ENCODE measurements at regions of chr15 and their contacts with region 1.

Region 1: GRCh38 chr15:84570164-84570735 is 30.6 kb upstream of the ZSCAN2 start:
- DNase-seq: peak; percentile 24 to 57 (median 41)
- H3K4me3 ChIP-seq: peak overlapping the region; percentile 65 to 69
- H3K4me3 Mint-ChIP-seq: peak overlapping the region; percentile 83 to 91 (median 87)
- H3K27ac ChIP-seq: peak overlapping the region; percentile 43
- H3K27ac Mint-ChIP-seq: peak overlapping the region; percentile 77 to 95 (median 89)
- H3K4me1 ChIP-seq: peaks cover 7% of the 10 kb centered on the region
- H3K4me1 Mint-ChIP-seq: peaks cover 4 to 24% (median 10%) of the 10 kb centered on the region in 4 donors
- H3K27me3 ChIP-seq: no peaks in the 10 kb centered on the region
- H3K27me3 Mint-ChIP-seq: no peaks in the 10 kb centered on the region

Region 2: DNA sequence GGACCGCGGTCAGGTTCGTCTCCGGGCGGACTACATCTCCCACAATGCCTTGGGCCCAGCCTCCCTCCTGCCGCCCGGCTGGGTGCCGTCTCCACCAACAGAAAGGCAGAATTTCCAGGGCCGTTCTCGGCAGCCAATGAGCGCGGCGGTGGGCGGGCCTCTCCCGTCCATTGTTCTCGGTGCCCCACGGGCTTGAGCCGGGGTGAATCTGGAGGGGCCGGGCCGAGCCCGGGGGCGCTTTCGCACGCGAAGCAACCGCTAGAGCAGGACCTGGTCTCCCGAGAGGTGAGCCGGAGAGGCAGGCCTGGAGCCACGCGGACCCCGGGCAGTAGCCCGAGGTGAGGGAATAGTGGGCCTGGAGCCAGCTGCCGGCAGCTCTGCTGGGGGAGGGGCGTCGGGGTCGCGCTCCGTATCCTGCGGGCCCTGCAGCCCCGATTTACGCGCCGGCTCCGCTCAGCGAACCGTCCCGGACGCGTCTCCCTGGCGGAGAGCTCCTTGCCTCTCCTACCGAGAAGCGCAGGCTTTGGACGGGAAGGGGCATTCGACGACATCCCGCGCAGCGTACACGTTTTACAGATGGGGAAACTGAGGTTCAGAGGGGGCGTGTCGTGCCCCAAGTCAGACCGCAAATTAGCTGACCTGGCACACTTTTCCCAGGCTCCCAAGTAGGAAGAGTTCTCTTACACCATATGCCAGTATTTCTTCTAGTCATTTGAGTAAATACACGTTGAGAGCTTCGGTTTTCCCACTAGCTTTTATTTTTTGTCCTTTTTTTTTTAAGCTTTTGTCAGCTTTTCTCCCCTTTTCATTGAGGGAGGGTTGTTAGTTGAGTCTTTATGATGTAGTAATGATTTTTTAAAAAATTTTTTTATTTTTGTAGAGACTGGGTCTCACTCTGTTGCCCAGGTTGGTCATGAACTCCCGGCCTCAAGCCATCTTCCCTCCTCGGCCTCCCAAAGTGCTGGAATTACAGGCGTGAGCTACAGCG is 30.9 kb after region 1 on chr15 and contains the start of gene ZSCAN2:
- CTCF ChIA-PET with region 1: interaction called, 6 read pairs
- POLR2A ChIA-PET with region 1: interaction called, 13 read pairs
- intact Hi-C with region 1: loop called (anchors 2 kb)
- DNase-seq: peak; percentile 89 to 94 (median 91)
- H3K4me3 ChIP-seq: peak within 1 kb of the TSS; percentile 85 to 93
- H3K4me3 Mint-ChIP-seq: peak within 1 kb of the TSS; percentile 91 to 99 (median 96)
- H3K27ac ChIP-seq: peak within 1 kb of the TSS; percentile 59
- H3K27ac Mint-ChIP-seq: peak within 1 kb of the TSS; percentile 83 to 96 (median 92)
- H3K4me1 ChIP-seq: peaks cover 50% of the 10 kb centered on the region
- H3K4me1 Mint-ChIP-seq: peaks cover 47 to 77% (median 64%) of the 10 kb centered on the region in 4 donors
- H3K27me3 ChIP-seq: no peaks in the 10 kb centered on the region
- H3K27me3 Mint-ChIP-seq: no peaks in the 10 kb centered on the region
- total RNA-seq, gene ZSCAN2: 11.4 to 14.1 TPM

Measured in CD4-positive, alpha-beta memory T cell (primary cell).